Panc1 (cell line): ENCODE measurements at regions of chr10 and their contacts with region 1.

Region 1: GRCh38 chr10:52652431-52653262 is 119.9 kb downstream of the MBL2 start:
- DNase-seq: no peak
- ATAC-seq: peak; percentile 75
- H3K4me3 ChIP-seq: no peak overlapping the region
- H3K27ac ChIP-seq: peak overlapping the region; percentile 85
- H3K4me1 ChIP-seq: peaks cover 21% of the 10 kb centered on the region
- H3K27me3 ChIP-seq: no peaks in the 10 kb centered on the region
- CTCF ChIP-seq: no peak

Region 2: DNA sequence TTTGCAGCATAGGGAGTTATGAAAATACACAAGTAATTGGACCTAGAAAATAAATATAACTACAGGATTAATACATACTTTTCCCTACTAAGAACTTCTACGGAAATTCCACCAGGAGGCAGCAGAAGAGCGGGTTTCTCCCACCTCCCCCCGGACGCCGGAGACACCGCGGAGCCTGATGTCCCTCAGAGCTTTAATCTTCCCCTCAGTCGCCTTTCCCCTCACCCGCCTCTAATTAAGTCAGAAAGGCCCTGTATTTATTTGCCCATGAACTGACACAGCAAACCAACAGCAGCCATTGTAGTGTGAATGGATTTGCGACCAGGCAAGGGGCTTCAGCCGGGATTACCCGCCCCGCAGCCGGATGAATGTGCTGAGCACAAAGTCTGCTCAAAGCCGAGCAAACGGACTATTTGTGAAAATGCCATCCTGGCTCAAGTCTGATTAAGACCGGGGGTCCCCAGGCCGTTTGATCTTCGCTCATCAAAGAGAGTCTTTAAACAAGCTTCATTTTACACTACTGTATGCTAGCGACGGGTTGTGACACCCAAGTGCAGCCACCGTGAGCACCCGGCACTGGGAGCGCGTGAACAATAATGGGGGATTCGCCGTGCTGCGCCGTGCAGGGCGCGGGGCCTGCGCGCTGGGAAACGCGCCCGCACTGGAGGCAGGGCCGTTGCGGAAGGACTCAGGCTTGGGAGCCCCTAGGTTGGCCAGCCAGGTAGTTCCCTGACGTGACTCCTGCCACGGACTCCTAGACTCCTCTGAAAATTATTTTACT is 344.2 kb before region 1 on chr10:
- CTCF ChIA-PET with region 1: interaction called, 3 read pairs
- POLR2A ChIA-PET with region 1: no interaction called
- in situ Hi-C with region 1: no loop called
- intact Hi-C with region 1: loop called (anchors 2 kb)
- DNase-seq: peak; percentile 64
- ATAC-seq: peak; percentile 86
- H3K4me3 ChIP-seq: peak overlapping the region; percentile 36 to 54
- H3K27ac ChIP-seq: peak overlapping the region; percentile 98
- H3K4me1 ChIP-seq: peaks cover 42% of the 10 kb centered on the region
- H3K27me3 ChIP-seq: no peaks in the 10 kb centered on the region
- CTCF ChIP-seq: peak; percentile 90

Region 3: GRCh38 chr10:52443419-52444388 is 208.9 kb before region 1 on chr10:
- CTCF ChIA-PET with region 1: no interaction called
- POLR2A ChIA-PET with region 1: no interaction called
- in situ Hi-C with region 1: no loop called
- intact Hi-C with region 1: loop called (anchors 2 kb)
- DNase-seq: peak; percentile 86
- ATAC-seq: peak; percentile 93
- H3K4me3 ChIP-seq: no peak overlapping the region
- H3K27ac ChIP-seq: peak overlapping the region; percentile 98
- H3K4me1 ChIP-seq: peaks cover 23% of the 10 kb centered on the region
- H3K27me3 ChIP-seq: no peaks in the 10 kb centered on the region
- CTCF ChIP-seq: no peak

Region 4: GRCh38 chr10:52558090-52558489 is 94.6 kb before region 1 on chr10:
- CTCF ChIA-PET with region 1: no interaction called
- POLR2A ChIA-PET with region 1: no interaction called
- in situ Hi-C with region 1: no loop called
- intact Hi-C with region 1: no loop called
- DNase-seq: no peak
- ATAC-seq: no peak
- H3K4me3 ChIP-seq: no peak overlapping the region
- H3K27ac ChIP-seq: no peak overlapping the region
- H3K4me1 ChIP-seq: no peaks in the 10 kb centered on the region
- H3K27me3 ChIP-seq: no peaks in the 10 kb centered on the region
- CTCF ChIP-seq: no peak